Ascending aorta (tissue), 2 donors: ENCODE measurements at regions of chr19 and their contacts with region 1.

Region 1: DNA sequence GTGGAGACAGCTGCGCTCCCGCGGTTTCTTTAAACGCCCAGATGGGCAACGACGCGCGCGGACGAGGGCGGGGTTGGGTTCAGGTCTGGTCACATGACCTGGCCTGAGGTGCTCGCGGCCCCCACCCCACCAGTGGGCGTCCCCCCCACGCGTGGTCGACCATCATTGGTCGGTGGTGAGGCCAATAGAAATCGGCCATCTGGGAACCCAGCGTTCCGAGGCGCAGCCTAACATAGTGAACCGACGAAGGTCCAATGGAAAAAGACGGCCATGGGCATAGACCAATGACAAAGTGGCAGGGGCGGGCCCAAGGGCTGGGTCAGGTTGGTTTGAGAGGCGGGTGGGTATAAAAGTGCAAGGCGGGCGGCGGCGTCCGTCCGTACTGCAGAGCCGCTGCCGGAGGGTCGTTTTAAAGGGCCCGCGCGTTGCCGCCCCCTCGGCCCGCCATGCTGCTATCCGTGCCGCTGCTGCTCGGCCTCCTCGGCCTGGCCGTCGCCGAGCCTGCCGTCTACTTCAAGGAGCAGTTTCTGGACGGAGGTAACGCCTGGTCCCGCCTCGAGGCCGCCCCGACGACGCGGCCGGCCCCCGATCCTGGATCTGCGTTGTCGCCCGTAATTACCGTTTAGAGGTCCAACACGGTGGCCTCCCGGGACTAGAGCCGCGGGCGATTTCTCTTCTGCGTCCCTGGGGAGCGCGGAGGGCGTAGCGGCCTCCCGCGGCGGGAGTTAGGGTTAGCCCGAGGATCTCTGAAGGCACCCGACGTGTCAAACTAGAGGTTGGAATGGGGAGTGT is at the start of gene CALR:
- DNase-seq: peak; percentile 100
- H3K4me3 ChIP-seq: peak within 1 kb of the TSS; percentile 92 to 98
- H3K27ac ChIP-seq: peak within 1 kb of the TSS; percentile 89 to 95
- H3K4me1 ChIP-seq: peaks cover 15 to 41% of the 10 kb centered on the region in 2 donors
- H3K27me3 ChIP-seq: no peaks in the 10 kb centered on the region
- CTCF ChIP-seq: peak in 2 of 3 experiments; percentile 22 to 54
- total RNA-seq, gene CALR: 297 TPM

Region 2: DNA sequence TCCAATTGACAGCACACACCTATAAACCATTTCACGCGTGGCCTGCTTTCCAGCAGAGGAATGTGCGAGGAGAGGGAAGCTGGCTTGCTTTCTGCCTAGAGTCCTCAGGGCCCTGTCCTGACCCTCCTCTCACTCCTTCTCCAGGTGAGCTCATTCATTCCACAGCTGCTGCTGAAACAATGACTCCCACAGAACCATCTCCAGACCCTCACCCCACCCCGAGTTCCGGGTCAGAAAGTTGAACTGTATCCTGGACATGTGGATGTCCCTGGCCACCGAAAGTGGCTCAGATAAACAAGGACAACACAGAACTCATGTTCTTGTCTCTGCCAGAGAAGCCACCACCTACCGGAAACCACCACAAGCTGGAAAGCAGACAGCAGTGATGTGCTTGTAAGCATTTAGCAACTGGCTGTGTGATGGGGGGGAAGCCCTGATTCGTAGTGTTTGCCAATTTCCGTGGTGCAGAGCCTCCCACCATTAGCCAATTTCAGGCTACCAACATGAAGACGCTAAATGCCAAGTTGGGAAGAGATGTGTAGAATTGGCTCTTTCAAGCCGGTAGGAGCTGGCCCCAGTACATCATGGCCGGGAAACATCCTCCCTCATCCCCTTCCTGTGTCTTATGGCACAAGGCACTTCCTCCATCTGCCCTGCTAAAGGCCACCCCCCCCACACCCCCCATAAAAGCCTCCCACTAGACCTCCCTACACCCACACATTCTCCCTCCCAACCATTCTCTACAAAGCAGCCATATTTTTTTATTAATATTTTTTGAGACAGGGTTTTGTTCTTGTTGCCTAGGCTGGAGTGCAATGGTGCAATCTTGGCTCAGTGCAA is 24.4 kb before region 1 on chr19:
- intact Hi-C with region 1: loop called (anchors 2 kb)
- DNase-seq: no peak
- H3K4me3 ChIP-seq: no peak overlapping the region
- H3K27ac ChIP-seq: no peak overlapping the region
- H3K4me1 ChIP-seq: peaks cover 3 to 15% of the 10 kb centered on the region in 2 donors
- H3K27me3 ChIP-seq: no peaks in the 10 kb centered on the region
- CTCF ChIP-seq: no peak

Region 3: DNA sequence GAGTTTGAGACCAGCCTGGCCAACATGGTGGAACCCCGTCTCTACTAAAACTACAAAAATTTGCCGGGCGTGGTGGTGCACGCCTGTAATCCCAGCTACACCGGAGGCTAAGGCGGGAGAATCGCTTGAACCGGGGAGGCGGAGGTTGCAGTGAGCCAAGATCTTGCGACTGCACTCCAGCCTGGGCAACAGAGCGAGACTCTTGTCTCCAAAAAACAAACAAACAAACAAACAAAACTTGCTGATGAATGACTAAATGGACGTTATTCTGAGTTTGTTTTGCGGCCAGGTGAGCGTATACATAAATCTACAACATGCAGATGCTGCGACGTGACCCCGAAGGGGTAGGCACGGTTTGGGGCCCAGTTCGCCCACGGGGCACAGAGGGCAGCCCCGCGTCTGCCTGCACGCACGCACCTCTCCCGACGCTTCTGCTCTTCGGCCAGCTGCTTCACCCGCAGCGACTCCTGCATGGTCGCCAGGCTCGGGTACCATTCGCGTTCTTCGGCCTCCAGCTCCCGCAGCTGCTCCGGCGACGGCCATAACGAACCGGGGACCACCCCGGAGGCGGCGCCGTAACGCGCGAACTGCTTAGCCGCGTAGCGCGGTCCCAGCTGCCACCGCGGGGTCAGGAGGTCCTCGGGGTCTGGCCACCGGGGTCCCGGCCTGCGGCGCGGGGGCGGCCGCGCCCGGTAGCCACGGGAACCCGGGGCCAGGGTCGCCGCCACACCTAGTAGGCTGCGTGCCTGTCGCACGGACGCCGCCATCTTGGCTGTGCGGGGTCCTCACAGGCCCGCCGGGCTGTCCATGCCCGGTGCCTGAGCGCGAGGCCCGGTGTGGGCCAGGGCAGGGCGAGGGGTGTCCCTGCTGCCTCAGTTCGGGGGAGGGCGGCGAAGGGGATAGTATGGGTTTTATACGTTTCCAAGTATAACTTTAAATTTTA is 18.3 kb after region 1 on chr19 and contains the start of gene GADD45GIP1:
- intact Hi-C with region 1: no loop called
- DNase-seq: peak in 1 of 2 donors; percentile 83
- H3K4me3 ChIP-seq: peak within 1 kb of the TSS; percentile 80 to 89
- H3K27ac ChIP-seq: peak within 1 kb of the TSS; percentile 88 to 95
- H3K4me1 ChIP-seq: peaks cover 22 to 30% of the 10 kb centered on the region in 2 donors
- H3K27me3 ChIP-seq: no peaks in the 10 kb centered on the region
- CTCF ChIP-seq: no peak
- total RNA-seq, gene GADD45GIP1: 42.7 TPM

Region 4: DNA sequence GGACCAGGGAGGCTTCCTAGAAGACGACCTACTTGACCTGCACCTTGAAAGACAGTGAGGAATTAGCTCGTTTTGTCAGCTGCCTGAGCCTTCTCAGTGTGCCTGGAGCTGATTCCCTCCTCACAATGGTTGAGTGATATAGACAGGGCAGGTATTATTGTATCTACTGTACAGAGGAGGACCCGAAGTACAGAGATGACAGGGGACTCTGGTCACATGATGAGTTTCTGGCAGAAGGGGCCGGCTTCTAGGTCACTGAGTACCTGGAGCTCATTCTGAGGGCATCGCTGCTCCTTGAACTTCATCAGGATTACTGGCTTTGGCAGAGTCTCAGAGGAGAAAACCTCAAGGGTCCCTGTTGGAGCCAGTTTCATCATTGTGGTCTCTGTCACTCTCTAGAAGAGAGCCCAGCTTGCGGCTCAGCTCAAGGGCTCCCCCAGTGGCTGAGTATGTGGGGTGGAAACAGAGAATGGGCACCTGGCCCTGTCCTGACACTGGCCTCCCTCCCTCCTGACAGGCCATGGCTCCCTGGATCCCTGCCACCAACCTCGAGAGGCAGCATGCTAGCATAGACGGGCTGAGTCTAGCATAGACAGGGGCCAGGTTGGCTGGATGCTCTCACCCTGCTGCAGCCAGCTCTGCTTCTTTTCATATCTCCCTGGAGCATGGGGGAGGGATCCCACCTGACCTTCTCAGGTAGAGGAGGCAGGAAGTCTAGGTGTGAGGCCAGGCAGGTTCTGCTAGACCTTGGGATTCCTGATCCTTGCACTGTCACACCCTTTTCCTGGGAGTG is 95.6 kb after region 1 on chr19:
- intact Hi-C with region 1: no loop called
- DNase-seq: peak in 1 of 2 donors; percentile 87
- H3K4me3 ChIP-seq: peak overlapping the region in 1 of 2 donors; percentile 18
- H3K27ac ChIP-seq: peak overlapping the region; percentile 95 to 97
- H3K4me1 ChIP-seq: peaks cover 45 to 94% of the 10 kb centered on the region in 2 donors
- H3K27me3 ChIP-seq: no peaks in the 10 kb centered on the region
- CTCF ChIP-seq: peak; percentile 67 to 73 (median 69)